GM23248 (cell line): ENCODE measurements at regions of chr2 and their contacts with region 1.

Region 1: GRCh38 chr2:96265840-96266679 is at the starts of genes CIAO1 and TMEM127:
- DNase-seq: peak; percentile 99
- H3K4me3 ChIP-seq: peak within 1 kb of the TSS; percentile 99
- H3K27ac ChIP-seq: peak within 1 kb of the TSS; percentile 77
- H3K4me1 ChIP-seq: peaks cover 34% of the 10 kb centered on the region
- H3K27me3 ChIP-seq: no peaks in the 10 kb centered on the region
- total RNA-seq, gene CIAO1: 110 and 126 TPM in 2 replicates
- total RNA-seq, gene TMEM127: 43.6 and 46.8 TPM in 2 replicates

Region 2: GRCh38 chr2:96024336-96025193 is 241.5 kb before region 1 on chr2:
- in situ Hi-C with region 1: loop called (anchors 25 kb)
- DNase-seq: no peak
- H3K4me3 ChIP-seq: no peak overlapping the region
- H3K27ac ChIP-seq: no peak overlapping the region
- H3K4me1 ChIP-seq: no peaks in the 10 kb centered on the region
- H3K27me3 ChIP-seq: no peaks in the 10 kb centered on the region

Region 3: DNA sequence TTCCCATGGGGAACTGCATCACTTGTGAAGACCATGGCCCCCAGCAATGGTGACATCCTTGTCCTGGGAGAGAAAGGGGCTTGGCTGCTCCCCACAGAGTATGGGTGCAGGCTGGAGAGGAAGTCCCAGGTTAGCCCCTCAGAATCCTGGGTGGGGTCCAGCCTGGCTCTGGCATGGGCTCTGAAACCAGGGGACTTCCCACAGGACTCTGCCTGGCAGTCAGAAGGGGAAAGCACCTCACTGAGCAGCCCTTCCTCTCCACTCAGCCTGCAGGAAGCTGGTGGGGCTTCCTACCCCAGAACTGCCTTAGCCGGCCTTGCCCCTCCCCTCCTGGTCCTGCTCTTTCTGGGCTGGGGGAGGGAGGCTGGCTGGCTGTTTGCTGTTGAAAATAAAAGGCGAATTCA is 235.4 kb after region 1 on chr2:
- in situ Hi-C with region 1: no loop called
- DNase-seq: no peak
- H3K4me3 ChIP-seq: no peak overlapping the region
- H3K27ac ChIP-seq: no peak overlapping the region
- H3K4me1 ChIP-seq: no peaks in the 10 kb centered on the region
- H3K27me3 ChIP-seq: peaks cover 38% of the 10 kb centered on the region

Region 4: DNA sequence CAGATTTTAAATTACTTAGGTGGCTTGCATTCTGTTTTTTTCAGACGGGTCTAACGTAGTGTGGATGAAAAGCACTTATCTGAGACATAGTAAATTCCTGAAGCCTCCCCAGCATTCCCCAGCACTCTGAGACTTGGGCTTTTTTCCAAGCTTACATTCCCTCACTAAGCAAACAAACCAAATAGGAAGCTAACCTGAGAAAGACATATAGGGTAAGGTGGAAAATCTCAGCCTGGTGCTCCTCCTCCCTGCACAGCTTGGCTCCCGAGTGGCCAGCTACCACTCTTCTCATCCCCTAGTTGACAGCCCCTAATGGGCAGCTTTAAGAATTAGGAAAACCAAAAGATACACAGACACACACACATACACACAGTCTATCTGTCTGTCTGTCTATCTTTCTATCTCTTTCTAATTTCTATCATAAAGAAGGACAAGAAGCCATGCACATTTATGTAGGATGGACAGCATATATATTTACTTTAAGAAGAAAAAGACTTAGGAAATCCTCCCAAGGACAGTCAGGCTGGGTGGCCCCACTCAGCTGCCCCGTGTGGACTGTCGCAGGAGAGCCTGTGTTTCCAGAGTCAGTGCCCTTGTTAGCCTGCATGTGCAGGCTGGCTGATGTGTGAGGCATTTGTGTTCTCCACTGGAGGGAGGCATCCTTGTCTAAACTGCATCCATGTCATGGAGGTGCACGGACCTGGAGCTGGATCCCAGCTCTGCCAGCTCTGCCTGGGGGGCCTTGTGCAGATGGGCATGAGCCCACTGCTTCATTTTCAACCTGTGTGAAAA is 558.2 kb after region 1 on chr2:
- in situ Hi-C with region 1: no loop called
- DNase-seq: no peak
- H3K4me3 ChIP-seq: no peak overlapping the region
- H3K27ac ChIP-seq: no peak overlapping the region
- H3K4me1 ChIP-seq: no peaks in the 10 kb centered on the region
- H3K27me3 ChIP-seq: no peaks in the 10 kb centered on the region